Calu3 (cell line): ENCODE measurements at regions of chr3 and their contacts with region 1.

Region 1: GRCh38 chr3:4722103-4722502 is 229.0 kb downstream of the ITPR1 start:
- DNase-seq: peak; percentile 53
- H3K4me3 Mint-ChIP-seq: no peak overlapping the region
- H3K27ac Mint-ChIP-seq: peak overlapping the region; percentile 10
- H3K4me1 Mint-ChIP-seq: peaks cover 25% of the 10 kb centered on the region
- H3K27me3 Mint-ChIP-seq: no peaks in the 10 kb centered on the region
- CTCF ChIP-seq: peak; percentile 20

Region 2: DNA sequence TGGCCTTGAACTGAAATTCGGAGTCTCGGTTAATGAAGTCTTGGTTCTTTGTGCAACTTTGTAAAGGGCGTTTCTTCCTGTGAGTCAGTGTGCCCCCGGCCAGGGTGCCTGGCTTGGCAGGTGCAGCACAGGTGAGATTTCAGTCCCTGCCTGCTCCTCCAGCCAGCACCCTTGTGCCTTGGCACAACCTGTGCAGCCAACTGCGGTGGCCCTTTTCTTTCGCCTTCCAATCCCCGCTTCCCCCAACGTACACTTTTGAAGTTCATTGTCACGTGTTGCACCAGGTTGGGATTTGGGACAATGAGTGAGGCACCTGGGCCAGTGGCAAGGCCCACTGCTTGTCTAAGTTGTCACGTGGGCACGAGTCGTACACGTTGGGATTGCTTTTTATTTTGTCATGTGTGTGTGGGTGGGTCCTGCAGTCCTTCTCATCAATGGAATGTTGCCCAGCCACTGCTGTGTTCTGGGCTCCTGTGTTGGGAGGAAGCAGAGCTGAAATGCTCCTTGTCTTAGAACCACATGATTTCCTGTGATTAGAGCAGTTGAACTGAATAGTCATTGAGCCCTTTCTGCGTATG is 14.3 kb after region 1 on chr3:
- CTCF ChIA-PET with region 1: interaction called, 3 read pairs
- intact Hi-C with region 1: loop called (anchors 1 kb)
- DNase-seq: peak; percentile 86
- H3K4me3 Mint-ChIP-seq: peak overlapping the region; percentile 58
- H3K27ac Mint-ChIP-seq: peak overlapping the region; percentile 92
- H3K4me1 Mint-ChIP-seq: peaks cover 63% of the 10 kb centered on the region
- H3K27me3 Mint-ChIP-seq: no peaks in the 10 kb centered on the region
- CTCF ChIP-seq: no peak

Region 3: GRCh38 chr3:4751502-4752101 is 29.5 kb after region 1 on chr3:
- CTCF ChIA-PET with region 1: interaction called, 15 read pairs
- intact Hi-C with region 1: loop called (anchors 1 kb)
- DNase-seq: peak; percentile 42
- H3K4me3 Mint-ChIP-seq: peak overlapping the region; percentile 69
- H3K27ac Mint-ChIP-seq: peak overlapping the region; percentile 99
- H3K4me1 Mint-ChIP-seq: peaks cover 46% of the 10 kb centered on the region
- H3K27me3 Mint-ChIP-seq: no peaks in the 10 kb centered on the region
- CTCF ChIP-seq: no peak

Region 4: DNA sequence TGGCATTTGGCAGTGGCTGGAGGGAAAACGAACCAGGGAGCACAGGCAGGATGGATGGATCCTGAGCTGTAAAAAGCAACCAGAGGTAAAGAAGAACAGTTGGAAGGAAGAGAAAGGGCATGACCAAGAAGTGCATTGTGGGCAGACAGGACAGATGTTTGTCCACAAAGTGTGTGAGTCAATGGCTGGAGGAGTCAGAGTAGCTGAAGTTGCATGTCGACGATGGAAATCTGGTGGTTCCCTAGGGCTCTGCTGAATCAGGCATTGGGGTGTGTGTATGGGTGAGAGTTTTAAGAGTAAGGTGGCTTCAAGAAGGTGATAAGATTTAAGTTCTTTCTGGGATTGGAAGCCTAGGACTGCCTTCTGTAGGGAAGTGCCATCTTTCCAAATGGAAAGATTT is 43.1 kb after region 1 on chr3:
- CTCF ChIA-PET with region 1: no interaction called
- intact Hi-C with region 1: no loop called
- DNase-seq: no peak
- H3K4me3 Mint-ChIP-seq: no peak overlapping the region
- H3K27ac Mint-ChIP-seq: no peak overlapping the region
- H3K4me1 Mint-ChIP-seq: no peaks in the 10 kb centered on the region
- H3K27me3 Mint-ChIP-seq: no peaks in the 10 kb centered on the region
- CTCF ChIP-seq: no peak

Region 5: GRCh38 chr3:4826237-4827100 is 104.4 kb after region 1 on chr3:
- CTCF ChIA-PET with region 1: interaction called, 5 read pairs
- intact Hi-C with region 1: loop called (anchors 5 kb)
- DNase-seq: peak; percentile 48
- H3K4me3 Mint-ChIP-seq: peak overlapping the region; percentile 39
- H3K27ac Mint-ChIP-seq: peak overlapping the region; percentile 65
- H3K4me1 Mint-ChIP-seq: peaks cover 57% of the 10 kb centered on the region
- H3K27me3 Mint-ChIP-seq: no peaks in the 10 kb centered on the region
- CTCF ChIP-seq: no peak

Region 6: GRCh38 chr3:5026331-5027218 is 304.5 kb after region 1 on chr3:
- CTCF ChIA-PET with region 1: interaction called, 16 read pairs
- intact Hi-C with region 1: loop called (anchors 1 kb)
- DNase-seq: peak; percentile 84
- H3K4me3 Mint-ChIP-seq: peak overlapping the region; percentile 69
- H3K27ac Mint-ChIP-seq: peak overlapping the region; percentile 96
- H3K4me1 Mint-ChIP-seq: peaks cover 28% of the 10 kb centered on the region
- H3K27me3 Mint-ChIP-seq: no peaks in the 10 kb centered on the region
- CTCF ChIP-seq: no peak

Region 7: GRCh38 chr3:5057857-5058324 is 335.8 kb after region 1 on chr3:
- CTCF ChIA-PET with region 1: interaction called, 4 read pairs
- intact Hi-C with region 1: loop called (anchors 1 kb)
- DNase-seq: peak; percentile 74
- H3K4me3 Mint-ChIP-seq: no peak overlapping the region
- H3K27ac Mint-ChIP-seq: no peak overlapping the region
- H3K4me1 Mint-ChIP-seq: peaks cover 8% of the 10 kb centered on the region
- H3K27me3 Mint-ChIP-seq: peaks cover 13% of the 10 kb centered on the region
- CTCF ChIP-seq: peak; percentile 52

Region 8: GRCh38 chr3:5162102-5162501 is 440.0 kb after region 1 on chr3:
- CTCF ChIA-PET with region 1: no interaction called
- intact Hi-C with region 1: no loop called
- DNase-seq: no peak
- H3K4me3 Mint-ChIP-seq: no peak overlapping the region
- H3K27ac Mint-ChIP-seq: no peak overlapping the region
- H3K4me1 Mint-ChIP-seq: peaks cover 21% of the 10 kb centered on the region
- H3K27me3 Mint-ChIP-seq: no peaks in the 10 kb centered on the region
- CTCF ChIP-seq: no peak